A673 (cell line): ENCODE measurements at regions of chr1 and their contacts with region 1.

Region 1: GRCh38 chr1:170010443-170010842 is 64.1 kb downstream of the KIFAP3 start:
- DNase-seq: peak; percentile 79
- H3K4me3 ChIP-seq: no peak overlapping the region
- H3K27ac ChIP-seq: no peak overlapping the region
- H3K4me1 ChIP-seq: no peaks in the 10 kb centered on the region
- H3K27me3 ChIP-seq: no peaks in the 10 kb centered on the region
- CTCF ChIP-seq: peak; percentile 69

Region 2: GRCh38 chr1:170162459-170163246 is 152.2 kb after region 1 on chr1:
- CTCF ChIA-PET with region 1: no interaction called
- POLR2A ChIA-PET with region 1: no interaction called
- intact Hi-C with region 1: no loop called
- DNase-seq: no peak
- H3K4me3 ChIP-seq: no peak overlapping the region
- H3K27ac ChIP-seq: no peak overlapping the region
- H3K4me1 ChIP-seq: no peaks in the 10 kb centered on the region
- H3K27me3 ChIP-seq: no peaks in the 10 kb centered on the region
- CTCF ChIP-seq: no peak

Region 3: DNA sequence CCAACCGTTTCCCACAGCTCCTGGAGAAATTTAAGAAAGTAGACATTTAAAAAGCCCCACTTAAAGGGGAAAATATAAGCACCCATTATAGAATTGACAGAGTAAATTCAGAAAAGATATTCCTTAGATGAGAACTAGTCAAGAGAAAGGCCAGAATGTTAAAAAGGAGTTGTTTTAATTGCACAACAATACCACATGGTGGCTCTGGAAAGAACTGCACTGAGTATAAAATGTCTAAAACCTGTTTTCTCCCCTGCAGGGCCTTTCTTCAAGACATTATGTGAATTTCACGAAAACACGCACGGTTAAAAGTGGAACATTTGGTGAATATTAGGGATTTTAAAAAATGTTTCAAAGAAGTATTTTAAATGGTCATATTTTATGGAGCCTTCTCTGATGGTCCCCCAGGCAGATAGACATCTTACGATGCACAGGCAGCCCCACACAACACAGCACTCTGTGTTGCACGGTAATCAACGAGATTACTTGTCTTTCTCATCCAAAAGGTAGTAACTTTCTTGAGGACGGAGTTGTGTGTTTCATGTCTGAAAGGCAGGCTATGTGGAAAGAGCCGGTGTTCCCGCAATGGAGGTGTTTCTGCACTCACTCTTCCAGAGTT is 755.4 kb after region 1 on chr1:
- CTCF ChIA-PET with region 1: no interaction called
- POLR2A ChIA-PET with region 1: no interaction called
- intact Hi-C with region 1: loop called (anchors 5 kb)
- DNase-seq: peak; percentile 48
- H3K4me3 ChIP-seq: no peak overlapping the region
- H3K27ac ChIP-seq: no peak overlapping the region
- H3K4me1 ChIP-seq: no peaks in the 10 kb centered on the region
- H3K27me3 ChIP-seq: no peaks in the 10 kb centered on the region
- CTCF ChIP-seq: peak; percentile 67

Region 4: GRCh38 chr1:170881268-170882265 is 871.1 kb after region 1 on chr1:
- CTCF ChIA-PET with region 1: no interaction called
- POLR2A ChIA-PET with region 1: no interaction called
- intact Hi-C with region 1: loop called (anchors 2 kb)
- DNase-seq: peak; percentile 48
- H3K4me3 ChIP-seq: no peak overlapping the region
- H3K27ac ChIP-seq: no peak overlapping the region
- H3K4me1 ChIP-seq: no peaks in the 10 kb centered on the region
- H3K27me3 ChIP-seq: peaks cover 3% of the 10 kb centered on the region
- CTCF ChIP-seq: peak; percentile 63

Region 5: DNA sequence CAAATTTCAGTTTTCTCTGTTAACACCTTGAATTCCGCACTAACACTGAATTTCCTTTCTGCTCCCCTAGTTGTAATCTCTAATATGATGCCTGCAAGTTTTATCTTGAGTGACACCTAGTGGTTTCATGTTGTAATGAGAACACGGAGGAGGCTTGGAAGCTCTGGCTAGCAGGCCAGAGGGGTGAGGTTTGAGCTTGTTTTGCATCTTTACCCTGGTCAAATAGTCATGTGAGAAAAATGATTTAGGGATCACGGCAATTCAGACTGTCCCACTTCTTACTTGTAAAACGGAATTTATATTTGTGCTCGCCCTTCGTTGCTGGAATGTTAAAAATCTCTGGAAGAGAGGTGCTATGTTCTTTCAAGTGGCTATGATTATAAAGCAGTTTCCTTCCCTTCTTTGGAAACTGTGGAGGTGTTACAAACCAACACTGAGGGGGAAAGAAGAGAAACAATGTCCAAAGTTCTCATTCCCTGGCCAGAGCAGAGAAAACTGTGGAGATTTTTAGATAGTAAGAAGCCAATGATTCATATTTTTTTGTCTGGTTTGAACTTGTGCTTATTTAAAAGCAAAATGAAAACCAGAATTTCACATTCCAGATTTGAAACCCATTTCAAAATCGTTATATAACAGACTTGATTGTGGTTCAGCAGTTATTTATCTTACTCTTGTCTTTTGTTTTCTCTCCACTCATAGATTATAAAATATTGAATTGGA is 919.6 kb after region 1 on chr1:
- CTCF ChIA-PET with region 1: no interaction called
- POLR2A ChIA-PET with region 1: no interaction called
- intact Hi-C with region 1: loop called (anchors 5 kb)
- DNase-seq: peak; percentile 71
- H3K4me3 ChIP-seq: no peak overlapping the region
- H3K27ac ChIP-seq: no peak overlapping the region
- H3K4me1 ChIP-seq: no peaks in the 10 kb centered on the region
- H3K27me3 ChIP-seq: peaks cover 8% of the 10 kb centered on the region
- CTCF ChIP-seq: peak; percentile 77